ENCODE measurements at regions of chrX and their contacts with region 1.

Region 1: DNA sequence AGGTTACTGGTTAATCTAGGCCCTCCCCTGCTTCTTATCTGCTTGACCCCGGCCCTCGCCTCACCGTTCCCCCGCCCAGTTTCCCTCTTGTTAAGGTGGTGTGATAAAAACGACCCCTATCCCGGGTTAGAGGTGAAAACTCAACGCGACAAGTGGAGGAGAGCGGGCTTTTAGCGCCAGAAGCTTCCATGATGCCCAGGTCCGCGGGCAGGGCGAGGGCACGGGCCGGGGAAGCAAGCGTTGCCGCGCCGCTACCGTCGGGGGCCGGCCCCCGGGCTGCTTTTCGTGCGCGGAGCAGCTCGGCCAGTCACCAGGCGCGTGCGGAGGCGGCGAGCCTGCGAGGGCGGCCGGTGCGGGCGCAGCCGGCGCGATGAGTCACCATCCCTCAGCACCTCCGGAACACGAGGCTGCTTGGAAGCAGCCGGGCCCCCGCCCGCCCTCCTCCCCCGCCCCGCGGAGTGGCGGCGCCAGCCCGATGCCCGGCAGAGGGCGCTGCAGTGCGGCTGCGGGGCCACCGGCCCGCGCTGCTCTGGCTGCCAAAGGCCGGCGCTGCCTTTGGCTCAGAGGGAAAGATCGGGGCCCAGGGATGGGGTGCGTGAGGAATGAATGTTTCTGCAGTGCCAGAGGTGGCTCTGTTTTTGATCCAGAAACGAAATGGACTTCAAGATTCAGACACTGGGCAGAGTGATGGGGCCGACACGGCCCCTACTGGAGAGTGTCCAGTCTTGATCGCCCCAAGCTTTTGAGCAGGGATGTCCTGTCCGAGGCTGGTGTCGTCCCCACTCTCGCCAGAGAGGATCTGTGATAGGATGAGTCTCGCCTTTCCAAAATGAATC is 107.8 kb downstream of the NHSL2 start:
- DNase-seq: peak; percentile 8
- H3K4me3 ChIP-seq: peak overlapping the region in 2 of 4 donors; percentile 29 to 54
- H3K27ac ChIP-seq: peak overlapping the region in 3 of 4 donors; percentile 57 to 68 (median 66)
- H3K4me1 ChIP-seq: peaks cover 0 to 19% (median 7%) of the 10 kb centered on the region in 3 donors
- H3K27me3 ChIP-seq: peaks cover 0 to 5% (median 2%) of the 10 kb centered on the region in 4 donors
- CTCF ChIP-seq: peak; percentile 59 to 81 (median 75)
- POLR2A ChIP-seq: peak in 1 of 4 donors; percentile 25

Region 2: DNA sequence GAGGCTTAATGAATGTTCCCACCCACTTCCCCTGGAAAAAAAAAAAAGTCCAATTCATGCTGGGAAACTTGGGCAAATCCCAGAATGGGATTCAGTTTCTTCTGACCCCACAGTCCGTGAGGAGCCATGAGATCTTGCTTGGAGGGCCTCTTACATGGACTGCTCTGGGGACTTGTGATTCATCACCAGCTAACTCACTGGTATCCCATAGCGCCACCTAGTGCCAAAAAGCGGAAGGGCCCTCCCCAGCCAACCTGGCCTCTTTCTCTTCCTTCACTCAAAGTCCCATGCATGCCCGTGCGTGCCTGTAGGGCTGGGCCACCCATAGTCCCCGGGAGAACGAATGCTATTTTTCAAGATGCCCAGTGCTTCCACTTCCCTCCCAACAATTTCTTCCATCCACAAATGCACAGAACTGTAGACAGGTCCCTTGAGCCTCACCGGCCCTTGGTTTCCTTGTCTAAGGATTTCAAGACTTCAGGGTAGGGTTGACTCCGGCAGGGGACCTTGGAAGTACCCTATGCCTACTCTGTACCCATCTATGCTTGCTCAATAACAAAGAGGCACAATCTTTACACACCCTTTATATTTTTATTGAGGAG is 108.1 kb after region 1 on chrX:
- intact Hi-C with region 1: loop called (anchors 10 kb)
- DNase-seq: no peak
- H3K4me3 ChIP-seq: no peak overlapping the region
- H3K27ac ChIP-seq: peak overlapping the region in 3 of 4 donors; percentile 68 to 83 (median 69)
- H3K4me1 ChIP-seq: peaks cover 11 to 88% (median 21%) of the 10 kb centered on the region in 3 donors
- H3K27me3 ChIP-seq: peaks cover 0 to 14% (median 3%) of the 10 kb centered on the region in 4 donors
- CTCF ChIP-seq: peak; percentile 71 to 90 (median 82)
- POLR2A ChIP-seq: no peak

Measured in esophagus squamous epithelium (tissue), 5 donors.